Aorta (tissue), 5 donors: ENCODE measurements at regions of chr4 and their contacts with region 1.

Region 1: GRCh38 chr4:105520817-105521790 is 31.3 kb upstream of the ARHGEF38 start:
- DNase-seq: no peak
- ATAC-seq: no peak
- H3K4me3 ChIP-seq: no peak overlapping the region
- H3K27ac ChIP-seq: no peak overlapping the region
- H3K4me1 ChIP-seq: no peaks in the 10 kb centered on the region
- H3K27me3 ChIP-seq: no peaks in the 10 kb centered on the region

Region 2: DNA sequence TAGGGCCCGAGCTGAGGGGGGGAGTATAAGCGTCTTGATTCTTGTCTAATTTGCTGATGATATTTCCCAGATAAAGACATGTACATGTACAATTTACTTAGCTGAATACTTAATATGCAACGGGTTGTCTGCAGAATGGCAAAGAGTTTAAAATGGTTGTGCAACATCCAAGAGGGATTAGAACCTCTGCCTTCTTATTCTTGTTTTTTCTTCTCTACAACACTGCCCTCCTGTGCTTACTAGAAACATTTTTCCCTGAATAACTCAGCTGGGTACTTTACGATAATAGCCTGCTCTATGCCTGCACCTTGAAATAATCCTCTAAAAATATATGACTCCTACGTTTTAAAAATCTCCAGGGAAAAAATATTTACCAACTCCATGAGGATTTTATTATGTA is 145.6 kb after region 1 on chr4:
- intact Hi-C with region 1: loop called in 1 of 2 experiments (anchors 10 kb)
- DNase-seq: no peak
- ATAC-seq: no peak
- H3K4me3 ChIP-seq: no peak overlapping the region
- H3K27ac ChIP-seq: no peak overlapping the region
- H3K4me1 ChIP-seq: no peaks in the 10 kb centered on the region
- H3K27me3 ChIP-seq: no peaks in the 10 kb centered on the region